K562 (cell line): ENCODE measurements at regions of chr22 and their contacts with region 1.

Region 1: GRCh38 chr22:18954990-18955571 is 19.0 kb upstream of the PRODH start:
- DNase-seq: no peak
- ATAC-seq: no peak
- H3K4me3 ChIP-seq: no peak overlapping the region
- H3K27ac ChIP-seq: no peak overlapping the region
- H3K4me1 ChIP-seq: peaks cover 0 to 9% of the 10 kb centered on the region in 2 experiments; a peak in 2 of 5 replicates
- H3K27me3 ChIP-seq: peaks cover 14 to 45% of the 10 kb centered on the region in 2 experiments; a peak in 4 of 5 replicates
- CTCF ChIP-seq: no peak
- EP300 ChIP-seq: no peak
- POLR2A ChIP-seq: no peak
- RAD21 ChIP-seq: no peak

Region 2: GRCh38 chr22:20283674-20284066 is 1328.6 kb after region 1 on chr22:
- CTCF ChIA-PET with region 1: no interaction called
- POLR2A ChIA-PET with region 1: no interaction called
- in situ Hi-C with region 1: loop called (anchors 5 kb)
- intact Hi-C with region 1: no loop called
- DNase-seq: peak in 1 of 4 experiments; percentile 27
- ATAC-seq: no peak
- H3K4me3 ChIP-seq: no peak overlapping the region
- H3K27ac ChIP-seq: no peak overlapping the region
- H3K4me1 ChIP-seq: peaks cover 0 to 25% of the 10 kb centered on the region in 2 experiments; a peak in 3 of 5 replicates
- H3K27me3 ChIP-seq: peaks cover 20 to 68% of the 10 kb centered on the region in 2 experiments; a peak in 4 of 5 replicates
- CTCF ChIP-seq: no peak
- EP300 ChIP-seq: no peak
- POLR2A ChIP-seq: no peak
- RAD21 ChIP-seq: no peak